ENCODE measurements at regions of chr14 and their contacts with region 1.

Region 1: GRCh38 chr14:91228112-91229004 is 16.1 kb downstream of the GPR68 start:
- DNase-seq: peak; percentile 88
- H3K4me3 Mint-ChIP-seq: peak overlapping the region; percentile 62
- H3K27ac Mint-ChIP-seq: peak overlapping the region; percentile 100
- H3K4me1 Mint-ChIP-seq: peaks cover 91% of the 10 kb centered on the region
- H3K27me3 Mint-ChIP-seq: no peaks in the 10 kb centered on the region

Region 2: DNA sequence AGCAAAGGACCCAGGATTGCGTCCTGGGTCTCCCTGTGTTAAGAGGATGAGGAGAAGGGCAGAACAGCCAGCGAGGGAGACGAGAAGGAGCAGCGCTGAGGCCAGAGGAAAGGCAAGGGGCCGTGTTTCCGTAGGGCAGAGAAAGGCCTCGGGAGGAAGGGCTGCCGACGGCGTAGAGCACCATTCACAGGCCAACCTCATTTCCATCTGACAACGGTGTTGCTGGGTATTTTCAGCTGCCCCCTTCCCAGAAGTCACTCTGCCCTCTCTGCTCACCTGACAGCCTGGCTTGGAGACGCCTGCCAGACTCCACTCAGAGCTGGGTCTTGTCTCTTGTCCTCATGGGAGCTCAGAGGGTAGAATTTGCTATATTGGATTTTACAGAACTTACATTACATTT is 35.3 kb before region 1 on chr14:
- CTCF ChIA-PET with region 1: interaction called, 4 read pairs
- POLR2A ChIA-PET with region 1: interaction called, 51 read pairs
- DNase-seq: no peak
- H3K4me3 Mint-ChIP-seq: no peak overlapping the region
- H3K27ac Mint-ChIP-seq: no peak overlapping the region
- H3K4me1 Mint-ChIP-seq: peaks cover 49% of the 10 kb centered on the region
- H3K27me3 Mint-ChIP-seq: no peaks in the 10 kb centered on the region

Region 3: GRCh38 chr14:91202234-91202974 is 26.0 kb before region 1 on chr14:
- CTCF ChIA-PET with region 1: interaction called, 6 read pairs
- POLR2A ChIA-PET with region 1: interaction called, 24 read pairs
- DNase-seq: peak; percentile 63
- H3K4me3 Mint-ChIP-seq: peak overlapping the region; percentile 37
- H3K27ac Mint-ChIP-seq: peak overlapping the region; percentile 81
- H3K4me1 Mint-ChIP-seq: peaks cover 68% of the 10 kb centered on the region
- H3K27me3 Mint-ChIP-seq: no peaks in the 10 kb centered on the region

Region 4: GRCh38 chr14:91249841-91250616 is 21.7 kb after region 1 on chr14:
- CTCF ChIA-PET with region 1: interaction called, 66 read pairs
- POLR2A ChIA-PET with region 1: interaction called, 886 read pairs
- DNase-seq: peak; percentile 82
- H3K4me3 Mint-ChIP-seq: peak overlapping the region; percentile 49
- H3K27ac Mint-ChIP-seq: peak overlapping the region; percentile 97
- H3K4me1 Mint-ChIP-seq: peaks cover 89% of the 10 kb centered on the region
- H3K27me3 Mint-ChIP-seq: no peaks in the 10 kb centered on the region

Region 5: DNA sequence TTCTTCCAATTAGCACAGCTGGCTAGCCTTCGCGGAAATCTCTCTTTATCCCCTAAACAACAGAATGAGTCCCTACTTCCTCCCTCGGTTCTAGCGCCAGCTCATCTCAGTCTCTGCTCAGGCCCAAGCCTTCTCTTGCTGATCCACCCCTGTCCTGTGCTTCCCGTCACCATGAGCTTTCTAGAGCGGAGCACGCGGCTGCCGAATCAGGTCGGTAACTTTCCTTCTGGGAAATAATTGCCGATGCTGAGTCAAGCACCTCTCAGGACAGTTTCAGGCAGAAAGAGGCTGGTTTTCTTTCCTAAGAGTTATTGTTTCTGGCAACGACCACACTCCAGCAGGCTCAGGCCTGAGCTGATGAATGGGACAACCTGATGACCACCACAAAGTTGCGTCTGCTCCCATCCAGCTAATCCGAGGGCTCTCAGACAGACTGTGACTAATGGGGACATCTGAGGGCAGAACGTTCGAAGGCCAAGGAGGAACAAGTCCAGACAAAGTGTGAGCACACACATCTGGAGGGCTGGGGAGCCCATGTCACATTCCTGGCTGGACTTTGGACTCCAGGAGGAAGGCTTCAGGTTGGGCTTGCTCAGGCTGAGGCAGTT is 29.8 kb after region 1 on chr14:
- CTCF ChIA-PET with region 1: no interaction called
- POLR2A ChIA-PET with region 1: interaction called, 886 read pairs
- DNase-seq: no peak
- H3K4me3 Mint-ChIP-seq: no peak overlapping the region
- H3K27ac Mint-ChIP-seq: peak overlapping the region; percentile 64
- H3K4me1 Mint-ChIP-seq: peaks cover 79% of the 10 kb centered on the region
- H3K27me3 Mint-ChIP-seq: no peaks in the 10 kb centered on the region

Region 6: DNA sequence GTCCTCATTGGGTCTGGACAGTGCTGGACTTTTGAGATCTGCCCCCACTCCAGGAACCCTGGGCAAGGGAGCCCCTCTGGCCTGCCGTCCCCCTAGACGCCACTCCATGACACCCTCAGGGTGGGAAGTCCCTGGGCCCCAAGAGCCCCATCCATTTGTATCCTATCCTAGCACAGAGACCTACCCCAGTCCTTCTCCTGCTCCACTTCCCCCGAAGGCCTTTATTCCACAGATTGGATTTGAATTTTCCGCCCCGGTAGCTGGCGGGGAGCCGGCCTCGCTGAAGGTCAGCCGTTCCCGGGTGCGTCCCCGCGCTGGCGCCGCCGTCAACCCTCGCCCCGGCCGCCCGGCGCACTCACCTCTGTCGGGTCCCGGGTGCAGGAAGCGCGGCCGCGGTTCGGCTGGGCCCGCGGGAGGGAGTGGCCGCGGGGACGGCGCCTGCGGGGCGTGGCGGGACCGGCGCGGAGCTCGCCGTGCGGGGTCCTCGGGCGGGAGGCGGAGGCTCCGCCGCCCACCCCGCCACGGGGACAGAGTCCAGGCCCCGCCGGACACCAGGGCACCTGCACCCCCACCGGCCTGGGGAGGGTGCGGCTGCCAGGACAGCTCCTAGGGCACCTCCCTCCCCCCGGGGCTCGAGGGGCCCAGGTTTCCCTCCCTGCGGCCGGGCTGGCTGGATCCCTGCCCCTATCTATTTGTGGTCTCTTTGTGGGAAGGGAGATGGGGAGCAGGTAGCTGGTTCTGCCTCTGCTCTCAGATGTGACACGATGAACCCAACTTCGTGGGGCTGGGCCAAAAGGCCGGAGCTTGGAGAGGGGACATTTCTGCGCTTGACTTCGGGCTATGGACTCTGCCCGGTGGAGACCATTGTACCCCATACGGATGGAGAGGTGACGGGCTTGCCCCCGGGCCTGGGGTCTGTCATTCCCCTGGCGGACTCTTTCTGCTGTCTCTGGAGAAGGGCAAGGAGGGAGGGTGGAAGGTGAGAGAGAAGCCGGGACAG is 36.1 kb after region 1 on chr14:
- CTCF ChIA-PET with region 1: no interaction called
- POLR2A ChIA-PET with region 1: interaction called, 33 read pairs
- DNase-seq: peak; percentile 50
- H3K4me3 Mint-ChIP-seq: peak overlapping the region; percentile 68
- H3K27ac Mint-ChIP-seq: no peak overlapping the region
- H3K4me1 Mint-ChIP-seq: peaks cover 63% of the 10 kb centered on the region
- H3K27me3 Mint-ChIP-seq: no peaks in the 10 kb centered on the region

Region 7: GRCh38 chr14:91521061-91521640 is 292.8 kb after region 1 on chr14:
- CTCF ChIA-PET with region 1: no interaction called
- POLR2A ChIA-PET with region 1: no interaction called
- DNase-seq: no peak
- H3K4me3 Mint-ChIP-seq: no peak overlapping the region
- H3K27ac Mint-ChIP-seq: no peak overlapping the region
- H3K4me1 Mint-ChIP-seq: peaks cover 9% of the 10 kb centered on the region
- H3K27me3 Mint-ChIP-seq: peaks cover 3% of the 10 kb centered on the region